ENCODE measurements at regions of chr2 and their contacts with region 1.

Region 1: DNA sequence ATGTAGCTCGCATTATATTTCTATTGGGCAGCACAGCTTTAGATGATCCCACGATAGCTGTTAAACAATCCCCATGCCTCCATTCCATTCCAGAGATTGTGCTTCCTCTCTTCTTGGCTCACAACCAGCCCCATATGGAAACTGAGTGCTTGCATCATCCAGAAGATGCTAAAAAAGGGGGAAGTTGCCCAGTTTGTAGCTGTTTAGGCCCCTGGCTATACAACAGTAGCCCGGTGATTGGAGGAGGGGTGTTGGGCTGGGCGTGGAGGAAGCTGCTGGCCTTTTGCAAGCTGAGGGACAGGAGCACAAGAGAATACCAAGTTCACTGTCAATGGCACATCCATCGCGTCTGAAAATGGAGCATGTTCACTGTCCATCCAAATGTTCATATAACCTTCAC is 360.2 kb downstream of the ALK start:
- DNase-seq: no peak
- ATAC-seq: no peak
- H3K4me3 Mint-ChIP-seq: no peak overlapping the region
- H3K27ac Mint-ChIP-seq: no peak overlapping the region
- H3K4me1 Mint-ChIP-seq: no peaks in the 10 kb centered on the region
- H3K27me3 Mint-ChIP-seq: peaks cover 4% of the 10 kb centered on the region

Region 2: DNA sequence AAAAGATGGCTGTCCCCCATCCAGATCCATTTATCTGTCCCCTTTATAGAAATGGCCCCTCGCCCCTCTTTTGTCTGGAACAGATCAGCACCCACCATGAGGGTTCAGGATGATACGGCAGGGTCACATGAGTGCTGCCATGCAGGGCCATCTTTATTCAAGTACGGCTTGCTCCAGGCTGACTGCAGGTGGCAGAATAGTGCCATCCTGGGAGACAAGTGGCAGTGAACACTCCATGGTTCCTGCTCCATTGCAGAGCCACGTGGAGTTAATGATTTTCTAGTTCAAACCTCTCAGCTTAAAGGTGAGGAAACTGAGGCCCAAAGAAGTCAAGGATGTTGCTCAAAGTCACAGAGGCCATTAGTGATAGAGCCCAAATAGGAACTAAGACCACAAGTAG is 265.3 kb before region 1 on chr2:
- CTCF ChIA-PET with region 1: no interaction called
- POLR2A ChIA-PET with region 1: no interaction called
- intact Hi-C with region 1: loop called in 1 of 2 experiments (anchors 10 kb)
- DNase-seq: peak; percentile 28
- ATAC-seq: no peak
- H3K4me3 Mint-ChIP-seq: no peak overlapping the region
- H3K27ac Mint-ChIP-seq: no peak overlapping the region
- H3K4me1 Mint-ChIP-seq: no peaks in the 10 kb centered on the region
- H3K27me3 Mint-ChIP-seq: peaks cover 40% of the 10 kb centered on the region

Region 3: DNA sequence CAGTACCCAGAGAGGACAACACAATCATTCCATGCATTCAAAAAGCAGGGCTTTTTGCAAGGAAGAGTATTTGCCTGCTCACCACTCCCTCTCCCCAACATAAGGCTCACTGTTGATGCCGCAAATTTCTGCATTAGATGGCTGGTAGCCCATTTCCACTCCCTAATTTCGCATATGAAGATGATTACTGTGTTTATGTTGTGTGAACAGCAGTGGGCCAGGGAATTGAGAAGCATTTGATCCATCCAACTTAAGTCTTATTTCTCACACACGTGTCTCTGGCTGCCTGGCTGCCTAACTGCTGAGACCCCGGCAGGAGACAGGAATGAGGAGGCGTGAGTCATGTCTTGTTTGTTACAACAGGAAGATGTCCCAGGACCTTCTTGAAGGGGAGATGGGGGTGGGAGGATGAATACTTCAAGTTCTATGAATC is 66.1 kb after region 1 on chr2:
- CTCF ChIA-PET with region 1: no interaction called
- POLR2A ChIA-PET with region 1: no interaction called
- intact Hi-C with region 1: no loop called
- DNase-seq: no peak
- ATAC-seq: no peak
- H3K4me3 Mint-ChIP-seq: no peak overlapping the region
- H3K27ac Mint-ChIP-seq: no peak overlapping the region
- H3K4me1 Mint-ChIP-seq: no peaks in the 10 kb centered on the region
- H3K27me3 Mint-ChIP-seq: peaks cover 21% of the 10 kb centered on the region

Region 4: GRCh38 chr2:29834624-29835023 is 273.4 kb after region 1 on chr2:
- CTCF ChIA-PET with region 1: no interaction called
- POLR2A ChIA-PET with region 1: no interaction called
- intact Hi-C with region 1: no loop called
- DNase-seq: no peak
- ATAC-seq: no peak
- H3K4me3 Mint-ChIP-seq: no peak overlapping the region
- H3K27ac Mint-ChIP-seq: no peak overlapping the region
- H3K4me1 Mint-ChIP-seq: no peaks in the 10 kb centered on the region
- H3K27me3 Mint-ChIP-seq: peaks cover 14% of the 10 kb centered on the region

Measured in activated CD4-positive, alpha-beta T cell treated with anti-CD3 and anti-CD28 coated beads for 36 hours (primary cell).